ENCODE measurements at regions of chr1 and their contacts with region 1.

Region 1: DNA sequence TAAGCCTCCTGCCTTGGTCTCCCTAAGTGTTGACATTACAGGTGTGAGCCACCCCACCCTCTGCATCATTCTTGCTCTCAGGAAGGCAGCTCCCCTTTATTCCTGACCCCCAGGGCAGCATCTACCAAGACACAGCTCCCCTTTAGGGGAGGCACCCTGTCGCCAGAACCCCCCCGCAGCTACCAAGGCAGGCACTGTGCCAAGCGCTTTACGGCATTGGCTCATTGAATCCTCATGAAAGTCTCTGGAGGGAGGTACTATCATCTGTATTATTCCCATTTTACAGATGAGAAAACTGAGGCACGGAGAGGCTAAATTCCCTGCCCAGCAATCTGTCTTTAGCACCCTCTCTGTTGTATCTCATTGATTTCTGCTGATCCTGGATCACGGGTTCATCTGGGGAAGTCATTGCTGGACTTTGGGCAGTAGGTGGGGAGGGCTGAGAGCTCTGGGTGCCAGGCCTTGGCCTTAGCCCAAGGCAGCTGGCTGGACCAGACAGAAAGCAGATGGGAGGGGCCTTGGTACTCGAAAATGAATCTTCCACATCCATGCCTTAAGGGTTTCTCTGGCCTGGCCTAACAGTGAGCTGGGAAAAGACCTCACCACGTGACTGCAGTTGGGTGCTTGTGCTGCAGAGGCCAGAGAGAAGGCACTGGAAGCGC is 5.9 kb downstream of the PLOD1 start:
- DNase-seq: no peak
- ATAC-seq: peak; percentile 37 to 59 (median 46)
- H3K4me3 ChIP-seq: no peak overlapping the region
- H3K27ac ChIP-seq: peak overlapping the region; percentile 41
- H3K4me1 ChIP-seq: peaks cover 67% of the 10 kb centered on the region
- H3K27me3 ChIP-seq: no peaks in the 10 kb centered on the region
- CTCF ChIP-seq: no peak

Region 2: GRCh38 chr1:11874258-11874562 is 66.2 kb before region 1 on chr1:
- intact Hi-C with region 1: loop called in 1 of 2 experiments (anchors 2 kb)
- DNase-seq: peak; percentile 80 to 96
- ATAC-seq: peak; percentile 86 to 94 (median 94)
- H3K4me3 ChIP-seq: no peak overlapping the region
- H3K27ac ChIP-seq: peak overlapping the region; percentile 66
- H3K4me1 ChIP-seq: peaks cover 15% of the 10 kb centered on the region
- H3K27me3 ChIP-seq: peaks cover 0 to 4% (median 0%) of the 10 kb centered on the region in 3 donors
- CTCF ChIP-seq: no peak

Region 3: GRCh38 chr1:11979851-11980675 is 39.7 kb after region 1 on chr1 and contains the start of gene MFN2:
- intact Hi-C with region 1: loop called in 1 of 2 experiments (anchors 5 kb)
- DNase-seq: peak; percentile 98 to 99
- ATAC-seq: peak; percentile 88 to 91 (median 90)
- H3K4me3 ChIP-seq: peak within 1 kb of the TSS; percentile 88
- H3K27ac ChIP-seq: peak within 1 kb of the TSS; percentile 97
- H3K4me1 ChIP-seq: peaks cover 47% of the 10 kb centered on the region
- H3K27me3 ChIP-seq: no peaks in the 10 kb centered on the region
- CTCF ChIP-seq: no peak
- total RNA-seq, gene MFN2: 245 to 542 (median 320) TPM